Esophagus squamous epithelium (tissue), 5 donors: ENCODE measurements at regions of chr17 and their contacts with region 1.

Region 1: DNA sequence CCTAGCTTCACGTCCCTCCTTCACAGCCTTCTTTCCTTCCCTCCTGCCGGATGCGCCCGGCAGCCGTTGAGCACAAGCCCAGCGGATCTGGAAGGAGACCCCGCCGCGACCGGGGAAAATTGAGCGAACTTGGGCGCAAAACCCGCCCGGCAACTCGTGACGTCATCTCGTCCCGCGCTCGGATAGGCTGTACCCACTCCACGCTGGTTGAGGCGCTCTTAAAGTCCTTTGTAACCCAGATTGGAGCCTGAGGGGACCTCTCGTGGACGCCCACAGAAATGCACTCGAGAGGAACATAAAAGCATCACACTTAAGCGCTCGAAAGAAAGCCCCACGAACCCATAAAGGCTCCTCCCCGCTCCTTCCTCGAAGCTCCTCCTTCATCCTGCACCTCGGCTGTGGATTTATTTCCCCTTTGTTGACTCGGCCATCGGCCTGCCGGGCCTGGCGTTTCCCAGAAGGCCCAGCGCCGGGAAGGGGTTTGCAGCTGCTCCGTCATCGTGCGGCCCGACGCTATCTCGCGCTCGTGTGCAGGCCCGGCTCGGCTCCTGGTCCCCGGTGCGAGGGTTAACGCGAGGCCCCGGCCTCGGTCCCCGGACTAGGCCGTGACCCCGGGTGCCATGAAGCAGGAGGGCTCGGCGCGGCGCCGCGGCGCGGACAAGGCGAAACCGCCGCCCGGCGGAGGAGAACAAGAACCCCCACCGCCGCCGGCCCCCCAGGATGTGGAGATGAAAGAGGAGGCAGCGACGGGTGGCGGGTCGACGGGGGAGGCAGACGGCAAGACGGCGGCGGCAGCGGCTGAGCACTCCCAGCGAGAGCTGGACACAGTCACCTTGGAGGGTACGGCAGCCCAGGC is at the start of gene PSMD3:
- DNase-seq: peak; percentile 92
- H3K4me3 ChIP-seq: peak within 1 kb of the TSS; percentile 89 to 98 (median 94)
- H3K27ac ChIP-seq: peak within 1 kb of the TSS; percentile 92 to 97 (median 95)
- H3K4me1 ChIP-seq: peaks cover 15 to 37% (median 21%) of the 10 kb centered on the region in 3 donors
- H3K27me3 ChIP-seq: peaks cover 0 to 20% (median 0%) of the 10 kb centered on the region in 4 donors
- CTCF ChIP-seq: peak; percentile 68 to 95 (median 91)
- POLR2A ChIP-seq: peak in 3 of 4 donors; percentile 80 to 91 (median 90)
- total RNA-seq, gene PSMD3: 72.2 to 121 (median 84.7) TPM

Region 2: GRCh38 chr17:39963829-39964228 is 16.8 kb before region 1 on chr17:
- intact Hi-C with region 1: loop called (anchors 1 kb)
- DNase-seq: no peak
- H3K4me3 ChIP-seq: no peak overlapping the region
- H3K27ac ChIP-seq: no peak overlapping the region
- H3K4me1 ChIP-seq: peaks cover 0 to 5% (median 0%) of the 10 kb centered on the region in 3 donors
- H3K27me3 ChIP-seq: peaks cover 0 to 25% (median 0%) of the 10 kb centered on the region in 4 donors
- CTCF ChIP-seq: no peak
- POLR2A ChIP-seq: no peak